SK-N-SH (cell line): ENCODE measurements at regions of chr10 and their contacts with region 1.

Region 1: DNA sequence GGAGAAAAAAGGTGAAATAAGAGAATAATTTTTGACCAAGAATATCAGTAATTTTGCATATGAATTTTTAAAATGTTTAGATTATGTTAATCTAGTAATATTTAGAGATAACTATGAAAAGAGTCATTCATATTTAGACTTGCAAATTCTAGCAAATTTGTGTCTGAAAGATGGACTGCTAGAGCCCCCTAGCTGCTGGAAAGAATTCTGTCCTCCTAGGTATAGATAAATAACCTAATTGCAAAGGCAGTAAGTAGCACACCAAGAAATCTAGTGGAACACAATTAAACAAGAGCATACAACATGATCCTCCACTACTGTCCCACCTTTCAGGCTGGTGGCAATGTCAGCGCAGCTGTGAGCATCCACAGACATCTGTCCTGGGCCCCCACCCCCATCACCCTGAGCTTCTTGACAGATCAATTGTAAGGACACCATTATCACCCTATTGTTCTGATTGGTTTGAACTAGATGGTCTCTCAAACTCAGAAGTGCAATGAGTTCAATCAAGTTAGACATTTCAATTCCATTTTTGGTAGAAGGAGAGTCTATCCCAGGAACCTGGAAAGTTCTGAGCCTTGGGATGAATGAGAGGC is 15.0 kb upstream of the GFRA1 start:
- DNase-seq: peak; percentile 60
- H3K4me3 ChIP-seq: no peak overlapping the region; a peak in 1 of 4 replicates
- H3K27ac ChIP-seq: no peak overlapping the region
- H3K4me1 ChIP-seq: no peaks in the 10 kb centered on the region
- H3K27me3 ChIP-seq: no peaks in the 10 kb centered on the region
- CTCF ChIP-seq: peak; percentile 81
- EP300 ChIP-seq: no peak
- RAD21 ChIP-seq: peak; percentile 94

Region 2: DNA sequence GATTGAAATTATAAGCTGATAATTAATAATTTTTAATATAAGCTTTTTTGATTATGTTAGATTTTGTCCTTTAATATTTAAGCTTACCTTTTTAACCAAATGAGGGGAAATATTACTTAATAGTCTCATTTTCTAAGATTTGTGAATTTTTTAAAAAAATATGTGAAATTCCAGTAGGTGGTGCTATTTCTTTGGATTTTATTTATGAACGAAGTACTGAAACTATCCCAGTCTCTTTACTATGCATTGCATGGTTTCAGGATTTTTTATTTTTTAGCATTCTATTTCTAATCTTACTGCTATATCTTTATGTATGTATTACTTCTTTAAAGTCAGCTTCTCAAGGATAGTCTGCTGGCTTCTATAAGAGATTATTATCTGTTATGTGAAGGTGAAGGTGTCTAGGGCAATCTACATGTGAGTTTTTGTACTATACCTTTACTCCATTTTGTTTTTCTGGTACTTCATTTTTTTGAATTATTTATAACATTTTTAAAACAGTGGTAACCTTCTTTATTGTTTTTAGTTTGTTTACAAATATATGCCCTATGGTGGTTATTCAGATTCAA is 1116.5 kb before region 1 on chr10:
- CTCF ChIA-PET with region 1: interaction called, 16 read pairs
- POLR2A ChIA-PET with region 1: no interaction called
- DNase-seq: peak; percentile 3
- H3K4me3 ChIP-seq: no peak overlapping the region; a peak in 1 of 4 replicates
- H3K27ac ChIP-seq: no peak overlapping the region
- H3K4me1 ChIP-seq: no peaks in the 10 kb centered on the region
- H3K27me3 ChIP-seq: no peaks in the 10 kb centered on the region
- CTCF ChIP-seq: peak; percentile 68
- EP300 ChIP-seq: no peak
- RAD21 ChIP-seq: peak; percentile 52

Region 3: DNA sequence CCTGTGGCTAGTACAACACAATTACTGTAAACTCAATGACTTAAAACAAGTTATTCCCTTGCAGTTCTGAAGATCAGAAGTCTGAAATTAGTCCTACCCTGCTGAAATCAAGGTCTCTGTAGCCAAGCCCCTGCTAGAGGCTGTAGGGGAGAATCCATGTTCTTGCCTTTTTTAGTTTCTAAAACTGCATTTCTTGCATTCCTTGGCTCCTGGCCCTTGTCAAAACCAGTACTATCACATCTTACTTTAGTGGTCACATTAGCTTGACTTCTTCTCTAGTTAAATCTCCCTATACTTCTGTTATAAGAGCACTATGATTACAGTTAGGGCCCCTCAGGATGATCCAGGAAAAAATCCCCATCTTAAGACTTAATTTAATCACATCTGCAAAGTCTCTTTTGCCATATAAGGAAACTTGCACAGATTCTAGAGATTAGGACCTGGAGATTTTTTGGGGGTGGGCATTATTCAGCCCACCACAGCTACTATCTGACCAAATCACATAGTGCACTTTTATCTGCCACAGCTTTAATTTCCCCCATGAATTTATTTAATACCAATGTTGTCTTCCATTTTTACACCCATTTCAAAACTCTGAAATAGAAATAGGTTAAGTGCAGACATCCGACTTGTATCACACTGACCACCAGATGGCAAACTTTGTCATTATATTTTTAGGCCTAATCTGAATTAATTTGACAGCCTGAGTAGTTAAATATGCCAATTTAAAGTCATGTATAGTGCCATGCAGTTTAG is 581.8 kb before region 1 on chr10:
- CTCF ChIA-PET with region 1: interaction called, 49 read pairs
- POLR2A ChIA-PET with region 1: no interaction called
- DNase-seq: peak; percentile 2
- H3K4me3 ChIP-seq: no peak overlapping the region
- H3K27ac ChIP-seq: no peak overlapping the region
- H3K4me1 ChIP-seq: no peaks in the 10 kb centered on the region; a peak in 1 of 4 replicates
- H3K27me3 ChIP-seq: no peaks in the 10 kb centered on the region
- CTCF ChIP-seq: peak; percentile 74
- EP300 ChIP-seq: no peak
- RAD21 ChIP-seq: peak; percentile 70

Region 4: DNA sequence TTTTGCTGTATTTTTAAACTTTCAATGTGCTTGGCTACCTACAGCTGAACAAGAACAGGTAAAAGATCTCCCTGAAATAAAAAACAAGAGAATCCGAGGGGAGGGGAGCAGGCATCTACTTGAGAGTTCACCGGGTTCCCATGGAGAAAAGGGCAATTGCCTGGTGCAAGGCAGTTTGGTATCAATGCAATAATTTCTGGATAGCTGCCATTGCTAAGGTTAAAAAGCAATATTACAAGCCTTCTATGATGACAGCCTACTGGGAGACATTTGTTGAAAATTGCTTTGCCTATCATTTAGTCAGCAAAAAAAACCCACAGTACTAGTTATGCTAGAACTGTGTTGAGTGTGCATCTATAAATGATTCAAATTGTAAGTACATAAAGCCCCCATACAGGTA is 97.1 kb before region 1 on chr10:
- CTCF ChIA-PET with region 1: no interaction called
- POLR2A ChIA-PET with region 1: no interaction called
- DNase-seq: no peak
- H3K4me3 ChIP-seq: no peak overlapping the region
- H3K27ac ChIP-seq: no peak overlapping the region
- H3K4me1 ChIP-seq: no peaks in the 10 kb centered on the region
- H3K27me3 ChIP-seq: no peaks in the 10 kb centered on the region
- CTCF ChIP-seq: no peak
- EP300 ChIP-seq: no peak
- RAD21 ChIP-seq: no peak

Region 5: DNA sequence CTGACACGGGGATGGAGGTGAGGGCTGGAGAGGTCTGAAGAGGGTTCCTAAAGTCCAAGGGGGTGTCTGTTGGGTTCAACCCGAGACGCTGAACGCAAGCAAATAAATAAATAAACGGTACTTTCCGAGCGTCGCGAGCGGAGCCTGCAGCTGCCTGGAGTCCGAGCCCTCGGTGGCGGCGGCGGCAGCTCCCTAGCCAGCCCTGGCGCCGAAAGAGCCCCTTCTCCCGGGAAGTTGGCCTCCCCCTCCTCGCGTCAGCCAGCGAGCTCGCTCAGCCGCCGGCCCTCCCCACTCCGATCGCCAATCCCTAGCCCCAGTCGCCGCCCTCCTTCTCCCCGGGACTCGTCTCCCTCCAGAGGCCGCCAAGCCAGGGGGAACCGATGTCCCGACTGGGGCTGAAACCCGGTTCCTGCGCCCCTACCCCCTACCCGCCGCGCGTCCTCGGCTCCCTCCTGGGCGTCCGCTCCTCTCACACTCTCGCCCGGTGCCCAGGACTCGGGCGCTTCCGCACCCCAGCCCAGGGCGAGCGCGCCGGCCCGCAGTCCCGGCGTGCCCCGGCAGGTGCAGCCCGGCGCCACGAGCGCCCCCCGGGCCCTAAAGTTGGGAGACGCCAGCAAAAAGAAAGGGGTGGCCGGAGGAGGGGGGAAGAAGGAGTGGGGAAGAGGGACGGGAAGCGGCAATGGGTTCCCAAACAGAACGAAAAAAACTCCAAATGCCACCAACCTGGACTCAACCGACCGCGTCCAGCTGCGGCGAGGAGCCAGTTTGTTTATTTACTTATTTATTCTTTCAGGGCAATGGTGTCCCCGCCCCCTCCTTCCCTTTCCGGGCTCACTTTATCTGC is 15.3 kb before region 1 on chr10 and contains the start of gene GFRA1:
- CTCF ChIA-PET with region 1: interaction called, 24 read pairs
- POLR2A ChIA-PET with region 1: no interaction called
- DNase-seq: peak; percentile 79
- H3K4me3 ChIP-seq: peak within 1 kb of the TSS; percentile 53 to 57
- H3K27ac ChIP-seq: no peak within 1 kb of the TSS
- H3K4me1 ChIP-seq: peaks cover 4 to 22% of the 10 kb centered on the region in 2 experiments; a peak in 1 of 4 replicates
- H3K27me3 ChIP-seq: peaks cover 41% of the 10 kb centered on the region
- CTCF ChIP-seq: no peak
- EP300 ChIP-seq: no peak
- RAD21 ChIP-seq: no peak
- polyA plus RNA-seq, gene GFRA1: 1.6 and 2.6 TPM in 2 replicates

Region 6: GRCh38 chr10:116385994-116386809 is 98.2 kb after region 1 on chr10:
- CTCF ChIA-PET with region 1: interaction called, 13 read pairs
- POLR2A ChIA-PET with region 1: no interaction called
- DNase-seq: no peak
- H3K4me3 ChIP-seq: no peak overlapping the region; a peak in 1 of 4 replicates
- H3K27ac ChIP-seq: no peak overlapping the region
- H3K4me1 ChIP-seq: no peaks in the 10 kb centered on the region; a peak in 1 of 4 replicates
- H3K27me3 ChIP-seq: no peaks in the 10 kb centered on the region
- CTCF ChIP-seq: peak; percentile 66
- EP300 ChIP-seq: no peak
- RAD21 ChIP-seq: peak; percentile 83

Region 7: DNA sequence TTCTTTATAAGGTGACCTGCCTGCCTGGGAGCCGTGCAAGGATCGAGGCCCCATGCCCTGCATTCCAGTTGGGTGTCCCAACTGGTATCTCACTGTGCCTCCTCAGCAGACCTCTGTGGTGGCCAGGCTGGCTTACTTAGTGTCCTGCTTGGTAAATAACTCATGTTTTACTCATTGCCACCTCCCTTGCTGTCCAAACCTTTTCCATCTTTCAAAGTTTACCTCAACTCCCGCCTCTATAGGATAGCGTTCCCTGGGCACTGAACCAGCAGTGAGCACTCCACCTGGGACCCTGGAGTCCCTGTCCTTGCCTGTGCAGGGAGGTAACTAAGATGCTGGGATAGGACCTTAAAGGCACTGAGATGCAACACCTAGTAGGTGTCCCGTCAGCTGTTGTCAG is 986.5 kb after region 1 on chr10:
- CTCF ChIA-PET with region 1: no interaction called
- POLR2A ChIA-PET with region 1: no interaction called
- DNase-seq: no peak
- H3K4me3 ChIP-seq: no peak overlapping the region
- H3K27ac ChIP-seq: no peak overlapping the region
- H3K4me1 ChIP-seq: peaks cover 0 to 11% of the 10 kb centered on the region in 2 experiments; a peak in 1 of 4 replicates
- H3K27me3 ChIP-seq: no peaks in the 10 kb centered on the region
- CTCF ChIP-seq: no peak
- EP300 ChIP-seq: no peak
- RAD21 ChIP-seq: no peak